Common myeloid progenitor, CD34-positive (primary cell): ENCODE measurements at regions of chr2 and their contacts with region 1.

Region 1: GRCh38 chr2:43542285-43542937 is 53.4 kb downstream of the THADA start:
- DNase-seq: peak; percentile 68 to 85 (median 83)
- H3K4me3 ChIP-seq: no peak overlapping the region
- H3K27ac ChIP-seq: no peak overlapping the region
- H3K4me1 ChIP-seq: peaks cover 15 to 34% (median 22%) of the 10 kb centered on the region in 4 experiments
- H3K27me3 ChIP-seq: no peaks in the 10 kb centered on the region

Region 2: GRCh38 chr2:43519643-43520221 is 22.7 kb before region 1 on chr2:
- CTCF ChIA-PET with region 1: interaction called, 21 read pairs
- POLR2A ChIA-PET with region 1: interaction called, 3 read pairs
- DNase-seq: peak in 2 of 3 donors; percentile 41 to 48
- H3K4me3 ChIP-seq: peak overlapping the region in 3 of 7 experiments; percentile 1 to 36 (median 15)
- H3K27ac ChIP-seq: peak overlapping the region; percentile 22 to 62
- H3K4me1 ChIP-seq: peaks cover 4 to 45% (median 23%) of the 10 kb centered on the region in 4 experiments
- H3K27me3 ChIP-seq: no peaks in the 10 kb centered on the region